MCF 10A (cell line): ENCODE measurements at regions of chr14 and their contacts with region 1.

Region 1: DNA sequence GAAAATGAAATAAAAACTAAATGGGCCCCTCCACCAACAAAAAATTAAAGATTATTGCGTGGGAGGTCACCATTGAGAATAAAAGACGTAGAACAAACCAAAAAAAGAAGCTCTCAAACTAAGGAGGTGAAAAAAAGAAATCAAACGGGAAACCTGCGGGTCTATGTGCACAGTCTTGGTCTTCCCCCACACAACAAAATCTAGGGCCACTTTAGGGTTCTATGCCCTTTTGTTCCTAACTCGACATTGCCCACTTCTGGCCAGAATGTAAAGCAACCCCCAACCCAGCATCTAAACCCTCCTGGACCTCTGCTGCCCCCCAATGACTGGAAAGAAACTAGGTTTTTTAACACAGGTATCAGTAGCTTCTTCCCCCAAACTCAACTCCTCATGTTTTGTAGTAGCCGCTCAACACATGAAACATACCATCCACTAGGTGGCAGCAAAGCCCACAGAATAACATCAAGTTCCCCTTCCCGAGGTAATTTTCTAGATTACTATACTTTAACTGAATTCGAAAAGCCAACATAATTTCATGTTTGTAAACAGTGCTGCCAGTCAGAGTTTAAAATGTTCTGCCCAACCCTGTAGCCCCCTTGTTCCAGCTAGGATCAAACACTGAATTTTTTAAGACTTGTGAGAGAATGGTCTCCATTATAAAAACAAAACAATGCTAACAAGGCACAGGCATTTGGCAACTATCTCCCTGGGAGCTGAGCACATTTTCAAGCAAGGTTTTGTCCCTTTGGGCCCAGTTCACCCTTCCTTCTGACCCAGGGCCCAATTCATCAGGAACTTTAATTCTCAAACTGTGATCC is 18.7 kb downstream of the DAD1 start:
- DNase-seq: peak; percentile 89
- H3K4me3 Mint-ChIP-seq: no peak overlapping the region
- H3K27ac Mint-ChIP-seq: peak overlapping the region; percentile 12
- H3K4me1 Mint-ChIP-seq: peaks cover 8% of the 10 kb centered on the region
- H3K27me3 Mint-ChIP-seq: no peaks in the 10 kb centered on the region
- CTCF ChIP-seq: peak; percentile 68

Region 2: DNA sequence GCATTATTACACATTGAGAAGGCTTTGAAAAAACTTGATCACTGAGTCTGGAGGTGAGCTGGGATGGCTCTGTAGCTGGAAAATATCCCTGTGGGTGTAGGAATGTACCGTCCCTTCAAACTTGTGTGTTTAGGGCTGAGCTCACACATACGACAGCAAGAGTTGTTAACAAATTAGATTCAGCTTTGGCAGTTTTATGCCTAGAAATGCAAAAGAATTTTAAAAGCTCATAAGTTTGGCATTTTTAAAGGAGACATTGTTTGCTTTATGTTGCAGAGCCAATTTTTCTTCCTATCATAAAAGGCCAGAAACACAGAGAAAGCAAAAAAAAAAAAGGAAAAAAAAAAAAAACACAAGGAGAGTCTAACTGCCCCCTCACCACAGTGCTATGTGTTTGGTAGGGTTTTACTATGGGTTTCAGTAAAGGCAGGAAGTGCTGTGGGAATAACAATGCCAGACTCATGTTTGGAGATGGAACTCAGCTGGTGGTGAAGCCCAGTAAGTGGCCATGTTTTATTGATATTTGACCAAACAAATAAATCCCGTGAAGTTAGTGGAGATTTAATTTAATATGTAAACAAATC is 59.7 kb before region 1 on chr14:
- CTCF ChIA-PET with region 1: no interaction called
- POLR2A ChIA-PET with region 1: no interaction called
- intact Hi-C with region 1: no loop called
- DNase-seq: no peak
- H3K4me3 Mint-ChIP-seq: no peak overlapping the region
- H3K27ac Mint-ChIP-seq: no peak overlapping the region
- H3K4me1 Mint-ChIP-seq: no peaks in the 10 kb centered on the region
- H3K27me3 Mint-ChIP-seq: no peaks in the 10 kb centered on the region
- CTCF ChIP-seq: no peak

Region 3: GRCh38 chr14:22536853-22537338 is 33.4 kb before region 1 on chr14:
- CTCF ChIA-PET with region 1: interaction called, 10 read pairs
- POLR2A ChIA-PET with region 1: no interaction called
- intact Hi-C with region 1: no loop called
- DNase-seq: peak; percentile 98
- H3K4me3 Mint-ChIP-seq: no peak overlapping the region
- H3K27ac Mint-ChIP-seq: peak overlapping the region; percentile 91
- H3K4me1 Mint-ChIP-seq: peaks cover 25% of the 10 kb centered on the region
- H3K27me3 Mint-ChIP-seq: no peaks in the 10 kb centered on the region
- CTCF ChIP-seq: no peak

Region 4: DNA sequence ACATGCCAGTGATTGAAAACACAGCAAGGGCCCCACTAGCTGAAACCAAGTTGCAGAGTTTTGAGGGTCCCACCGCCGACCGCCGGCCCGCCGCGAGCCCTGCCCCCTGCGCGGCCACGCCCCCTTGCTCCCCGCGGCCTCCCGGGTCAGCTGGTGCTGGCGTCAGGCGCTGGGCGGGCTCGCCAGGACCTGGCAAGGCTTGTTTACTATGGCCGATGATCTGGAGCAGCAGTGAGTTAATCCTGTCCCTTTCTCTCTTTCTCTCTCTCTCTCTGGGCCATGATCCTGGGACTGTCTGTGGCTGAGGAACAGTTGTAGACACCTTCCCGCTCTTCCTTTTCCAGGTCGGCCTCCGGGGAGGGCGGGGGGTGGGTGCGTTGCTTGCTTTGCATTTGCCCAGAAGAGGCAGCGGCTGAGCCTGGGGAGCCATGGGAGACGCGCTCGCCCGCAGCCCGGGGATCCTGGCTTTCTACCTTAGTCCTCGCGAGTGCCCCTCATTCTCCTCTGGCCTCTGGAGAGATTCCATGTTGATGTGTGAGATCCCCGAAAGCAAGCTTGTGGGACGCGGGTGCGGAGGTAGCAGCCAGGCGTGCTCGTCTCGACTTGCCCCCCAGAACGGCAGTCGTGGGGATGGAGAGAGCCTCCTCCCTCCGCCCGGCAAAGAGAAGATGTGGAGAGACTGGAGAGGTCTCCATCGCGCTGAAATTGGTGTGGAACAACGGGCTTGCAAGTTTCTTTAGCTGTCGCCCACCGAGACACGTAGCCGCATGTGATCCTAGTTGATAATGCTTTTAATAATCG is 28.0 kb after region 1 on chr14 and contains the start of gene ABHD4:
- CTCF ChIA-PET with region 1: interaction called, 25 read pairs
- POLR2A ChIA-PET with region 1: interaction called, 19 read pairs
- intact Hi-C with region 1: no loop called
- DNase-seq: peak; percentile 60
- H3K4me3 Mint-ChIP-seq: peak within 1 kb of the TSS; percentile 97
- H3K27ac Mint-ChIP-seq: peak within 1 kb of the TSS; percentile 88
- H3K4me1 Mint-ChIP-seq: peaks cover 15% of the 10 kb centered on the region
- H3K27me3 Mint-ChIP-seq: peaks cover 26% of the 10 kb centered on the region
- CTCF ChIP-seq: no peak
- total RNA-seq, gene ABHD4: 10.3 and 16.7 TPM in 2 replicates

Region 5: GRCh38 chr14:22646570-22647254 is 76.4 kb after region 1 on chr14:
- CTCF ChIA-PET with region 1: interaction called, 206 read pairs
- POLR2A ChIA-PET with region 1: interaction called, 22 read pairs
- intact Hi-C with region 1: loop called (anchors 1 kb)
- DNase-seq: peak; percentile 77
- H3K4me3 Mint-ChIP-seq: peak overlapping the region; percentile 34
- H3K27ac Mint-ChIP-seq: peak overlapping the region; percentile 94
- H3K4me1 Mint-ChIP-seq: peaks cover 40% of the 10 kb centered on the region
- H3K27me3 Mint-ChIP-seq: no peaks in the 10 kb centered on the region
- CTCF ChIP-seq: no peak

Region 6: GRCh38 chr14:22699801-22700564 is 129.6 kb after region 1 on chr14:
- CTCF ChIA-PET with region 1: interaction called, 13 read pairs
- POLR2A ChIA-PET with region 1: no interaction called
- intact Hi-C with region 1: no loop called
- DNase-seq: no peak
- H3K4me3 Mint-ChIP-seq: no peak overlapping the region
- H3K27ac Mint-ChIP-seq: no peak overlapping the region
- H3K4me1 Mint-ChIP-seq: no peaks in the 10 kb centered on the region
- H3K27me3 Mint-ChIP-seq: peaks cover 39% of the 10 kb centered on the region
- CTCF ChIP-seq: no peak

Region 7: DNA sequence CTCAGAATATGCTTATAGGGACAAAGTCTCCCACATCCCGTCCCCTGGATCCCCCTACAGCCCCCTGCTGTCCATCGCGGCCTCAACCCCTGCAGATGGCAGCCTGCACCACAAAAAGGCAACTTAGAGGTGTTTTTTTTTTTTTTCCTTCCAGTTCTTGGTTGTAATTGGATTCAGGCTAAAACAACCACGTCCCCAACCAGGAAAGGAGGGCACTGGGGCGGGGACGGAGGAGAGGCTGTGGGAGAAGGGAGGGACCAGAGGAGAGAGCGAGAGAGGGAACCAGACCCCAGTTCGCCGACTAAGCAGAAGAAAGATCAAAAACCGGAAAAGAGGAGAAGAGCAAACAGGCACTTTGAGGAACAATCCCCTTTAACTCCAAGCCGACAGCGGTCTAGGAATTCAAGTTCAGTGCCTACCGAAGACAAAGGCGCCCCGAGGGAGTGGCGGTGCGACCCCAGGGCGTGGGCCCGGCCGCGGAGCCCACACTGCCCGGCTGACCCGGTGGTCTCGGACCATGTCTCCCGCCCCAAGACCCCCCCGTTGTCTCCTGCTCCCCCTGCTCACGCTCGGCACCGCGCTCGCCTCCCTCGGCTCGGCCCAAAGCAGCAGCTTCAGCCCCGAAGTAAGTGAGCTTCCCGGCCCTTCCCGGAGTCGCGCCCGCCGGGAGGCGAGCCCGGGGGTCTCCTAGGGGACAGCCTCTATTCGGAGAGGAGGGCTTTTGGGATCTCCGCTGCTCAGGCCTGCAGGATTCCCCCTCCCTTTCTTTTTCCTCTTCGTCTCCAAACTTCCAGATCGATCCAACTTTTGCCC is 266.2 kb after region 1 on chr14 and contains the start of gene MMP14:
- CTCF ChIA-PET with region 1: interaction called, 9 read pairs
- POLR2A ChIA-PET with region 1: interaction called, 10 read pairs
- intact Hi-C with region 1: no loop called
- DNase-seq: peak; percentile 78
- H3K4me3 Mint-ChIP-seq: peak within 1 kb of the TSS; percentile 99
- H3K27ac Mint-ChIP-seq: peak within 1 kb of the TSS; percentile 98
- H3K4me1 Mint-ChIP-seq: peaks cover 21% of the 10 kb centered on the region
- H3K27me3 Mint-ChIP-seq: no peaks in the 10 kb centered on the region
- CTCF ChIP-seq: no peak
- total RNA-seq, gene MMP14: 71.5 and 78.6 TPM in 2 replicates